SK-N-SH (cell line): ENCODE measurements at regions of chr5 and their contacts with region 1.

Region 1: GRCh38 chr5:128213340-128213739 is 129.8 kb downstream of the SLC12A2 start:
- DNase-seq: peak; percentile 31
- H3K4me3 ChIP-seq: peak overlapping the region in 1 of 2 experiments; percentile 14; a peak in 1 of 4 replicates
- H3K27ac ChIP-seq: no peak overlapping the region
- H3K4me1 ChIP-seq: no peaks in the 10 kb centered on the region
- H3K27me3 ChIP-seq: no peaks in the 10 kb centered on the region; the same call in 1 of the 2 replicates
- CTCF ChIP-seq: peak; percentile 86
- EP300 ChIP-seq: no peak
- RAD21 ChIP-seq: peak; percentile 94

Region 2: GRCh38 chr5:128201065-128201926 is 12.0 kb before region 1 on chr5:
- CTCF ChIA-PET with region 1: interaction called, 11 read pairs
- POLR2A ChIA-PET with region 1: no interaction called
- DNase-seq: peak; percentile 82
- H3K4me3 ChIP-seq: peak overlapping the region; percentile 6 to 47; a peak in 3 of 4 replicates
- H3K27ac ChIP-seq: no peak overlapping the region
- H3K4me1 ChIP-seq: peaks cover 0 to 3% of the 10 kb centered on the region in 2 experiments; a peak in 1 of 4 replicates
- H3K27me3 ChIP-seq: no peaks in the 10 kb centered on the region
- CTCF ChIP-seq: peak; percentile 91
- EP300 ChIP-seq: no peak
- RAD21 ChIP-seq: peak; percentile 88

Region 3: GRCh38 chr5:128290152-128290864 is 77.0 kb after region 1 on chr5:
- CTCF ChIA-PET with region 1: no interaction called
- POLR2A ChIA-PET with region 1: no interaction called
- DNase-seq: no peak
- H3K4me3 ChIP-seq: no peak overlapping the region
- H3K27ac ChIP-seq: no peak overlapping the region
- H3K4me1 ChIP-seq: no peaks in the 10 kb centered on the region
- H3K27me3 ChIP-seq: no peaks in the 10 kb centered on the region
- CTCF ChIP-seq: no peak
- EP300 ChIP-seq: no peak
- RAD21 ChIP-seq: no peak

Region 4: DNA sequence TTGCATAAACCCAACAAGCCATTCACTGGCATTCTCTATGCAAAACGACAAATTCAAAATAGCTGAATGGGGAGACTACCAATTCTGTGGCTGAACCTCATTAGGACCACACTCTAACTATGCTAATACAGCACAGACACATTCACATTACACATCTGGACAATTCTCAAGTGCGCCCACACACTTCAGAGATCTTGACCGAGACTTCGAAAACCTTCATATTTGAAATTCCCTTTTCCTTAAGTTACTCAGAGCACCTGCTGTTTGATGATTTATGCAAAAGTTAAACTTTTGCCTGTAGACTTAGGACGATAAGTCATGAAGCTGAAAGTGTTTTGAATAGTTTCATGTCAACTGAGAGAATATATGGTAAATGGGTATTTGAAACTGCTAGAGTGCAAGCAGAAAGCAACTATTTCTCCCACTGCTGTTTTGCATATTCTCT is 212.8 kb after region 1 on chr5:
- CTCF ChIA-PET with region 1: no interaction called
- POLR2A ChIA-PET with region 1: no interaction called
- DNase-seq: no peak
- H3K4me3 ChIP-seq: no peak overlapping the region
- H3K27ac ChIP-seq: no peak overlapping the region
- H3K4me1 ChIP-seq: no peaks in the 10 kb centered on the region; a peak in 1 of 4 replicates
- H3K27me3 ChIP-seq: 0 out of 2 replicates have a peak, but pooled peaks cover under 1% of the 10 kb centered on the region
- CTCF ChIP-seq: no peak
- EP300 ChIP-seq: no peak
- RAD21 ChIP-seq: no peak

Region 5: DNA sequence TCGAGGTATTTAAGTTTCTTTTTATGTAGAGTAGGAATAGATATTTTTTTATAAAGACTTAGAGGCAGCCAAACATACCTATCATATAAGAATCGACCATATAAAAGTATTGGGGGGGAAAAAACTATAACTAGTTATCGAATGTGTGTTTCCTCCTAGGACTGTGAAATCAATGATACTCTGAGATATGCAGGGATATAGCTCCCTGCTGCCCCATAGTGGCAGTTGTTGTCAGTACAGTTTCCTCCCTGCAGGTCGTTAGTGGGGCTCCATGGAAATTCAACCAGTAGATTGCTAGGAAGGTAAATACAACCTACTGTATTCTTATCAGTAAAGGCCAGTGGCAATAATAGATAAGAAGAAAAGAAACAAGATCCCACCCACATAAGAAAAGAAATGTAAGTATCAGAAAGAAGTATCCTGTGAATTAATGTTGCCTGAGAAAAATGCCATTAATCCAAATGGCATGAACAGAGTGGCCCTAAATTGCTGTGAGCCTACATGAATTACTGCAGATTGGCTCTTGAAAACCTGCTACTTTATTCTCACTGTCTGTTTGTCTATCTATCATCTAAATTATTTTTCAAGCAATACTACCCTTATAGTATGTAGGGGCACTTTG is 461.6 kb after region 1 on chr5:
- CTCF ChIA-PET with region 1: interaction called, 20 read pairs
- POLR2A ChIA-PET with region 1: no interaction called
- DNase-seq: peak; percentile 41
- H3K4me3 ChIP-seq: no peak overlapping the region; a peak in 1 of 4 replicates
- H3K27ac ChIP-seq: no peak overlapping the region
- H3K4me1 ChIP-seq: no peaks in the 10 kb centered on the region
- H3K27me3 ChIP-seq: no peaks in the 10 kb centered on the region; the same call in 1 of the 2 replicates
- CTCF ChIP-seq: peak; percentile 83
- EP300 ChIP-seq: no peak
- RAD21 ChIP-seq: peak; percentile 73